ENCODE measurements at regions of chr5 and their contacts with region 1.

Region 1: GRCh38 chr5:107919969-107920368 is 249.2 kb upstream of the EFNA5 start:
- DNase-seq: no peak
- H3K4me3 ChIP-seq: no peak overlapping the region
- H3K27ac ChIP-seq: no peak overlapping the region
- H3K4me1 ChIP-seq: no peaks in the 10 kb centered on the region
- CTCF ChIP-seq: no peak

Region 2: GRCh38 chr5:107869438-107870115 is 50.4 kb before region 1 on chr5:
- CTCF ChIA-PET with region 1: no interaction called
- POLR2A ChIA-PET with region 1: no interaction called
- intact Hi-C with region 1: loop called (anchors 5 kb)
- DNase-seq: no peak
- H3K4me3 ChIP-seq: no peak overlapping the region
- H3K27ac ChIP-seq: no peak overlapping the region
- H3K4me1 ChIP-seq: no peaks in the 10 kb centered on the region
- CTCF ChIP-seq: no peak